Activated CD4-positive, alpha-beta memory T cell treated with anti-CD3 and anti-CD28 coated beads for 36 hours (primary cell): ENCODE measurements at regions of chr3 and their contacts with region 1.

Region 1: DNA sequence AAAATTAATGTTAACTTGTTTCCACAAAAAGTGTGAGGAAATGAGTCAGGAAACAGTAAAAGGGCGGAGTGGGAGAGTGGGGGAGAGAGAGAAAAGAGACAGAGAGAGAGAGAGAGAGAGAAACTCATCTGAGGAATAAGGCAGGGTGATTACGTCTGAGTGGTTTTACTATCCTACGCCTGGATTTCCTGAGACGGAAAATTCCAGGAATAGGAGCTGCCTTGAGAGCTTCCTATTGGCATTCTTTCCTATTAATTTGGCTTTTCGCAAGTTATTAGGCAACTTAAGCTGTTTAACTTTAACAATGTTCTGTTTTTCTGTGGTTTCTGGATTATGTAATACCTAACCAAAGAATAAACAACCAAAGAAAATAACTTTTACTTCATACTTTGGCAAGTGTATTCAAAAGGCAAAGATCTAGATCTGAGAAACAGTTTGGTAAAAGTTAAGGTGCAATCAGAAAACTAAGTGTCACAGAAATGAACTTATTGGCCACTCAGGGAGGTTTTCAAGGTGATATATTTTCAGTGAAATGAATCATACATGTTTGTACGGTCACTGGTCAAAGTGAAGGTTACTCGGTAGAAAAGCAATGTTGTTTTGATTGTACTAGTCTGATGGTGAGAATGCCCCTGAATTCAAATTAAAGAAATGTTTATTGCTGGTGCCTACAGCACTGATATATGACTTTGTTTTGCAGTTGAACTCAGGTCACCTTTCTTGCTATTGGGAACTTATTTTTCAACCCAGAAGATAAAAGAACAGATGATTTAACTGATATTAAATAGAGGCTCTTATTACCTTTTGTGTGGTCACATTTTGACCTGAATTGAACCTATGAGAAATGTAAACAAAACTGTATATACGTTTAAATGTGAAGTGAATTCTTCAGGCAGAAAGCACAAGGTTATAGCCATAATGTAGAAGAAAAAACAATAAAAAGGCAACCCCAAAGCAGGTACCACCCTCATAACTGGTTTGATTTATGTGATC is 39.9 kb upstream of the TNFSF10 start:
- DNase-seq: peak; percentile 64
- H3K4me3 Mint-ChIP-seq: peak overlapping the region; percentile 42
- H3K27ac Mint-ChIP-seq: peak overlapping the region; percentile 94
- H3K4me1 Mint-ChIP-seq: peaks cover 33% of the 10 kb centered on the region
- H3K27me3 Mint-ChIP-seq: no peaks in the 10 kb centered on the region

Region 2: DNA sequence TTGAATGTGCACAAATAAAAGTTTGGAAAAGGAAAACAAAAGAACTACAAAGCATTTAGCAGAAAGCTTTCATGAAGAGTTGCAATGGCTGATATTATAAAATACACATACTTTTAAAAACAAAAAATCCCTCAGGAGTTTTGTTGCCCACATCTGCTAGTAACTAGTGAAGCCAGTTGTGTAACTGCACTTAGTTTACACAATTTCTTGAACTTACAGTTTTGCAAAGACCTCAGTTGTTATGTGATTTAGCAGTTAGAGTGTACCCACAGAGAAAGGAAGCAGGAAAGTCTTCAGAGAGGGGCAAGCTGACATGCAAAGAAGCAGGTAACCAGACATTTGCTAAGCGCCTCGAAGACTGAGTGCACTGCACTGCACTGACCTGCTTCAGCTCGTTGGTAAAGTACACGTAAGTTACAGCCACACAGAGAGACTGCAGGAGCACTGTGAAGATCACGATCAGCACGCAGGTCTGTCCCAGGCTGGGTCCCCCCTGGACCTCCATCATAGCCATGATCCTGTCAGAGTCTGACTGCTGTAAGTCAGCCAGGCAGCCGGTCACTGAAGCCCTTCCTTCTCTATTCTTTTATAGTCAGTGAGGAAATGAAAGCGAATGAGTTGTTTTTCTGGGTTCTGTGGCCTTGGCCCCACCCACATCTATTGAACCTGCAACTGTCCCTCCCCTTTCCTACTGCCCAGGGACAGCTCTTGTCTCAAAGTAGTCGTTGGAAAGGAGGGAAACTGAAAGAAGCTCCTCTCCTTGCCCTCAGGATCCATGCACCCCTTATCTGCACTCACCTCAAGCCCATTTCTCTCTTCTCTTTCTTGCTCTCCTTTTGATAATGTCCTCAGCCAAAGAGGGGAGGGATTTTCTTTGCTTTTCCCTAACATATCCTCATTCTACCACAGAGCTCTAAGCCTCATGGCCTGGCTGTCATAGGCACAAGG is 40.0 kb before region 1 on chr3 and contains the start of gene TNFSF10:
- CTCF ChIA-PET with region 1: no interaction called
- POLR2A ChIA-PET with region 1: interaction called, 7 read pairs
- intact Hi-C with region 1: loop called (anchors 1 kb)
- DNase-seq: peak; percentile 84
- H3K4me3 Mint-ChIP-seq: peak within 1 kb of the TSS; percentile 94
- H3K27ac Mint-ChIP-seq: peak within 1 kb of the TSS; percentile 94
- H3K4me1 Mint-ChIP-seq: peaks cover 48% of the 10 kb centered on the region
- H3K27me3 Mint-ChIP-seq: no peaks in the 10 kb centered on the region
- total RNA-seq, gene TNFSF10: 30.1 to 31.8 TPM

Region 3: GRCh38 chr3:172530566-172530965 is 32.6 kb before region 1 on chr3:
- CTCF ChIA-PET with region 1: interaction called, 8 read pairs
- POLR2A ChIA-PET with region 1: interaction called, 20 read pairs
- intact Hi-C with region 1: loop called (anchors 1 kb)
- DNase-seq: peak; percentile 42
- H3K4me3 Mint-ChIP-seq: peak overlapping the region; percentile 23
- H3K27ac Mint-ChIP-seq: peak overlapping the region; percentile 86
- H3K4me1 Mint-ChIP-seq: peaks cover 24% of the 10 kb centered on the region
- H3K27me3 Mint-ChIP-seq: no peaks in the 10 kb centered on the region

Region 4: DNA sequence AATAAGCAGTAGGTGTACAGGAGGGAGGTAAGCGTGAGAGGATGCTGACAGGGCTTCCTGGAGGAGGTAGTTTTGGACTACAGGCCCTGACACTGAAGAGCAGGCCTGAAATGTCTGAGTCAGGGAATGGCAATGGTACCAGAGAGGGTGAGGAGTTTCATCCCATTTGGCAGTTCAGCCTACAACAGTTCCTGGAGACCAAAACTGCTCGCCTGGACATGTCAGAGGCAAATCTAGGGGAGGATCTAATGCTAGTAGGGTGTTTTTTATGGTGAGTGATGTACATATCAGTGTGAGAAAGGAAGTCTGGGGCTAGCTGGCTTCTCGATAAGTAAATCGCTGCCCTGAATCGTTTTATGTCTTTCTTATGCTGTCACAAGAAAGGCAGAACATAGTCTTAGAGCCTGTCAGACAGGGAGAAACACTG is 26.2 kb before region 1 on chr3:
- CTCF ChIA-PET with region 1: no interaction called
- POLR2A ChIA-PET with region 1: interaction called, 3 read pairs
- intact Hi-C with region 1: loop called (anchors 1 kb)
- DNase-seq: peak; percentile 30
- H3K4me3 Mint-ChIP-seq: peak overlapping the region; percentile 48
- H3K27ac Mint-ChIP-seq: peak overlapping the region; percentile 90
- H3K4me1 Mint-ChIP-seq: peaks cover 37% of the 10 kb centered on the region
- H3K27me3 Mint-ChIP-seq: no peaks in the 10 kb centered on the region

Region 5: DNA sequence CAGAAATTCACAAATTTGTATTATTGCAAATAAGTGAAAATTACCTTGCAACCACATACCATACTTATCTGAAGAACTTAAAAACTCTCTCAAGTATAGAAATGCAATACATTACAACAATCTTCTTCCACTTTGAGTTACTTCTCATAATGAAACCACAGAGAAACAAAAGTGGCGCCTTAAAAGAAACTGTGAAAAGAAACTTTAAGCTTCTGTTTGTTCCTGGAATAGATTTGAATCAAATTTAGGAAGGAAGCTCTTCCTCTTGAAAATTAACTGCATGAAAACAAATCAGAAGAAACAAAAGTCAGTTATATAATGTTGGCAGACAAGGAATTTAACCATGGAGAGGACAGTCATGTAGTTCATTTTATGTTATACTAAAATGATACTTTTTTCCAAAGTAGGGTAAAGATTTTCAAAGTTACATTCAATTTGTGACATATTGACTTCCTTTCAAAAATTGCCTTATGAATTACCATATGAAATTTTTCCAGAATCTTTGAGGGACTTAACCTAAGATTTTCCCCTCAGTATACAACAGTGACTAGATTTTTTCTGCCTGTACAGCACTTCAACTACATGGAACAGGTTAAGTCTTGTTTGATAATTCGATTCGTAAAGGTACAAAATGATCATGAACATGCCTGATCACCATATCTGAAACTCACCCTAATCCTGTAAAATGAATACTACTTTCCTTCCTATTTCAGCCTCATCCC is 17.7 kb after region 1 on chr3:
- CTCF ChIA-PET with region 1: interaction called, 11 read pairs
- POLR2A ChIA-PET with region 1: interaction called, 18 read pairs
- intact Hi-C with region 1: loop called (anchors 1 kb)
- DNase-seq: no peak
- H3K4me3 Mint-ChIP-seq: peak overlapping the region; percentile 18
- H3K27ac Mint-ChIP-seq: peak overlapping the region; percentile 68
- H3K4me1 Mint-ChIP-seq: peaks cover 78% of the 10 kb centered on the region
- H3K27me3 Mint-ChIP-seq: peaks cover 2% of the 10 kb centered on the region

Region 6: GRCh38 chr3:172616031-172616461 is 52.9 kb after region 1 on chr3:
- CTCF ChIA-PET with region 1: no interaction called
- POLR2A ChIA-PET with region 1: no interaction called
- intact Hi-C with region 1: no loop called
- DNase-seq: no peak
- H3K4me3 Mint-ChIP-seq: no peak overlapping the region
- H3K27ac Mint-ChIP-seq: no peak overlapping the region
- H3K4me1 Mint-ChIP-seq: peaks cover 14% of the 10 kb centered on the region
- H3K27me3 Mint-ChIP-seq: no peaks in the 10 kb centered on the region